Right cardiac atrium (tissue), 5 donors: ENCODE measurements at regions of chr6 and their contacts with region 1.

Region 1: DNA sequence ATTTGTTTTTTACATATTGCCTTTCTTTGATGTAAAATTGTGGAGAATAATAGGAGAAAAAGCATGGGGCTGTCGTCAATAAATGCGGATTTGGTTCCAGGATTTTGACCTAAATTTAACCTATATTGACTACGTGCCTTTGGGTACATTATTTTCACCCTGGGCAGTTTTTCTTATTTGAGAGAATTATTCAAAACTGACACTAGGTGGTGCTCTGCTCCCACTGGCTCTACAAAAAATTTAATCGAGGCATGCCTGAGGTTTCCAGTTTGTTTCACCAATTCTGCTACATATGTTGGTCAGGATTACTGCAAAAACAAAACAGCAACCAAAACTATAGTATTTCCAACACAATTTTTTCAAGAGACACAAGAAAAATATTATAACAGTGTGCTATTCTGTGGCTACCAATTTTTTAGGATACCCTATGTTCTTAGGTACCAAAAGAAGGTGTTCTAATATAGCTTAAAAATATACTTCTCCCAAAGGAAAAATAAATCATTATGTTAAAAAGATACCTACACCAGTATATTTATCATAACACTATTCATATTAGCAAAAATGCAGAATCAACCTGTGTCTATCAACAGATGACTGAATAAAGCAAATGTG is 48.6 kb upstream of the FABP7 start:
- DNase-seq: no peak
- ATAC-seq: no peak
- H3K4me3 ChIP-seq: no peak overlapping the region
- H3K27ac ChIP-seq: no peak overlapping the region
- H3K4me1 ChIP-seq: no peaks in the 10 kb centered on the region
- H3K27me3 ChIP-seq: no peaks in the 10 kb centered on the region

Region 2: DNA sequence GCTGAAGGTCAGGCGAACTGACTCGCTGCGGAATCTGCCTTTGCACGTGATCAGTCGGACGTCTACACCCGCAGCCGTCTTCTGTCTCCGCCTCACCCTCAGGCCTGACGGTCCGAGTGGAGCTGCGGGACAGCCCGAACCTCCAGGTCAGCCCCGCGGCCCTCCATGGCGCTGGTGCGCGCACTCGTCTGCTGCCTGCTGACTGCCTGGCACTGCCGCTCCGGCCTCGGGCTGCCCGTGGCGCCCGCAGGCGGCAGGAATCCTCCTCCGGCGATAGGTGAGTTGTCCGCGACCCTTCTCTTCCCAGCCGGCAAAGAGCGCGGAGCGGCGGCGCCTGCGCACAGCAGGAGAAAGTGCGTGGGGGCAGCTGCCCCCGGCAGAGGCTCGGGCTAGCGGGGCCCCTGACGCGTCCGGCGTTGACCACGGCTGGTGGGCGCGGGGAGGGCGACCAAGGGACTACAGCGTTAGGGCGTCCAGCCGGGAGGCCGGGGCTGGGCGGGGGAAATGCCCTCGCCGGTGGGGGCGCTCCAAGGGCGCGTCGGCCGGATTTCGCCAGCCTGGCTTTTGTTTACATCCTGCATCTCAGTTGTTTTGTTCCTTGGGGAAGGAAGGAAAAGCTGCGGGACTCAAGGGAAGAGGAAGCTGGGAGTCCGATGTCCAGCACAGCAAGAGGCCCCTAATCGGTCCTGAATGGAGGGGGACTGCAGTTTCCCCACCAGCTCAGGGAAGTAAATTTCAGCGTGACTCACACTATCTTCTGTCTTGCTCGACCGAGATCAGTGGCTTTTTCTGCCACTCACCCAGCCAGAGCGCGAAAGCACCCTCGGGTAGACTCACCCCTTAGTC is 58.5 kb after region 1 on chr6 and contains the start of gene SMPDL3A:
- intact Hi-C with region 1: loop called in 1 of 4 experiments (anchors 10 kb)
- DNase-seq: peak; percentile 68 to 89 (median 88)
- ATAC-seq: peak; percentile 92 to 93
- H3K4me3 ChIP-seq: peak within 1 kb of the TSS; percentile 60
- H3K27ac ChIP-seq: peak within 1 kb of the TSS; percentile 86
- H3K4me1 ChIP-seq: no peaks in the 10 kb centered on the region
- H3K27me3 ChIP-seq: no peaks in the 10 kb centered on the region
- total RNA-seq, gene SMPDL3A: 4.7 to 8.3 (median 7.5) TPM

Region 3: DNA sequence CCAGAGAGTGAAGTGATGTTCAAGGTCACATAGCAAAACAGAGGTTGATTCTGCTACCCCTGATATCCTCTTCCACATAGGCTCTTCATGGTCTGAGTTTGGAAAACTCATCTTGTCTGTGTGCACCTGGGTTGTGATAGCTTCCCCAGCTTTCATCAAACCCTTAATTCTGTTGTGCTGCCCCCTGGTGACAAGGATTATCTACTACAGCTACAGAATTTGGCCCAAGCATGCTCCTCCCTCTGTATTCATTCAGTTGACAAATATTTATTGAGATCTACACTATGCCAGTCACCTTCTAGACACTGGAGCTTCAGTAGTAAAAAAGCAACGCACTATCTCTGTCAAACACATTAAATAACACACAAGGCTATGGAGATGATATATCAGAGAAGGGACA is 108.6 kb after region 1 on chr6:
- intact Hi-C with region 1: loop called (anchors 2 to 5 kb)
- DNase-seq: peak in 1 of 3 donors; percentile 11
- ATAC-seq: peak; percentile 33 to 59
- H3K4me3 ChIP-seq: no peak overlapping the region
- H3K27ac ChIP-seq: no peak overlapping the region
- H3K4me1 ChIP-seq: no peaks in the 10 kb centered on the region
- H3K27me3 ChIP-seq: no peaks in the 10 kb centered on the region

Region 4: GRCh38 chr6:123316733-123317323 is 585.9 kb after region 1 on chr6:
- intact Hi-C with region 1: loop called in 2 of 4 experiments (anchors 10 kb)
- DNase-seq: no peak
- ATAC-seq: no peak
- H3K4me3 ChIP-seq: no peak overlapping the region
- H3K27ac ChIP-seq: no peak overlapping the region
- H3K4me1 ChIP-seq: no peaks in the 10 kb centered on the region
- H3K27me3 ChIP-seq: no peaks in the 10 kb centered on the region